H1 (cell line): ENCODE measurements at regions of chr11 and their contacts with region 1.

Region 1: GRCh38 chr11:14892036-14892567 is at the start of gene CYP2R1:
- DNase-seq: peak; percentile 89 to 92
- H3K4me3 ChIP-seq: peak within 1 kb of the TSS; percentile 51 to 71 (median 63)
- H3K27ac ChIP-seq: no peak within 1 kb of the TSS
- H3K4me1 ChIP-seq: no peaks in the 10 kb centered on the region; a peak in 2 of 7 replicates
- H3K27me3 ChIP-seq: peaks cover 0 to 4% (median 4%) of the 10 kb centered on the region in 4 experiments; a peak in 2 of 7 replicates
- CTCF ChIP-seq: no peak
- EP300 ChIP-seq: no peak
- POLR2A ChIP-seq: no peak
- RAD21 ChIP-seq: no peak
- total RNA-seq, gene CYP2R1: 12.9 and 13.8 TPM in 2 replicates

Region 2: DNA sequence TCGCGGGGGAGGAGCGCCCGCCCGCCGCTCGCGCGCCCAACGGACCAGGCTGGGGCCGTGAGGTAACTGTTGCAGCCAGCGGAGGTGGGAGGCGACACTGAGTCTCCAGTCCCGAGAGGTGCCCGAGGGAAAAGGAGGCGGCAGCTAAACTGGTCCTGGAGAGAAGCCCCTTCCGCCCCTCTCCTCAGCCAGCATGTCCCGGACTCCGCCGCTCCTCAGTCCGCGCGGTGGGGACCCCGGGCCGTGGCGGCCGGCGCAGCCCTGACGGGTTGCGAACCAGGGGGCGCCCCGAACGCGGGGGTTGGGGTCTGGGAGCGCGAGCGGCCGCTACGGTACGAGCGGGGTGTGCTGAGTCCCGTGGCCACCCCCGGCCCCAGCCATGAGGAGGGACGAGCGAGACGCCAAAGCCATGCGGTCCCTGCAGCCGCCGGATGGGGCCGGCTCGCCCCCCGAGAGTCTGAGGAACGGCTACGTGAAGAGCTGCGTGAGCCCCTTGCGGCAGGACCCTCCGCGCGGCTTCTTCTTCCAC is 248.3 kb before region 1 on chr11 and contains the start of gene PDE3B:
- CTCF ChIA-PET with region 1: no interaction called
- POLR2A ChIA-PET with region 1: interaction called, 10 read pairs
- DNase-seq: no peak
- H3K4me3 ChIP-seq: peak within 1 kb of the TSS; percentile 74 to 89 (median 76)
- H3K27ac ChIP-seq: peak within 1 kb of the TSS; percentile 18; the same call in 1 of the 2 replicates
- H3K4me1 ChIP-seq: peaks cover 0 to 3% (median 0%) of the 10 kb centered on the region in 4 experiments; a peak in 2 of 7 replicates
- H3K27me3 ChIP-seq: peaks cover 2 to 30% (median 19%) of the 10 kb centered on the region in 4 experiments
- CTCF ChIP-seq: no peak; a peak in 1 of 4 replicates
- EP300 ChIP-seq: no peak
- POLR2A ChIP-seq: peak; percentile 82 to 89; a peak in 2 of 3 replicates
- RAD21 ChIP-seq: no peak; a peak in 1 of 4 replicates
- total RNA-seq, gene PDE3B: 9.9 and 10.9 TPM in 2 replicates